ENCODE measurements at regions of chr16 and their contacts with region 1.

Region 1: DNA sequence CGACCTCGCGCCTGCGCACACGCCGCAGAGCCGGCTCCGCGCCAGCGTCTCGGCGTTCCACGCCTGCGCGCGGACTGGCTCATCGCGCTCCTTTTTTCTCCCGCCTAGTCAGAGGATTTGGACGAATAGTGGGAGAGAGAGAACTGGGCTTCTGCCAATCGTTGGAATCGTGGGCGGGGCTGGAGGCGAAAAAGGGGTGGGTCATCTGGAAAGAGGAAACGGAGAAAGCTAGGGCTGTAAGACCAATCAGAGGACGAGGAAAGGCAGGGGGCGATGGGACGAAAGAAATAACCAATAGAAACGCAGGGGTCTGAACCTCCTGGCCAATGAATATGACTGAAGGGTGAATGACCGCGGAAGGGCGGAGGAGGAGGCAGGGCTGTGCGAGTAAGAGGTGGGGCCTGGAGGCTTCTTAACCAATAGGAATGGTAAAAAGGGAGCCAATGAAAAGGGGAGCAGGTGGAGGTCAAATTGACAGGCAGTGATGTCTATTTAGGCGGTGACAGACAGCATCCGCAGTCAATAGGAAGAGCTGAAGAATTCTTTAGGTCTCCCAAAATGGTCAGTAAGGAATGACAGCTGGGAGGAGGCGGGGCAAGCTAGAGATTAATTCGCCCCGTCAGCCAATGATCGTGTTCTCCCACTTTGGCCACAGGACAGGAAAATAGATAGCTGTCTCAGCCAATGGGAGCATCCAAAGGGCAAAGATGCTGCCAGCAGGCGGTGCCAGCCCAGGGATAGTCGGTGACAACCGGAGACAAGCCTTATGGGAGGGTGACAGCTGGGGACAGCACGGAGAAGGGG is at the start of gene TBC1D10B:
- DNase-seq: peak; percentile 96 to 100 (median 99)
- ATAC-seq: peak; percentile 83 to 86 (median 84)
- H3K4me3 ChIP-seq: peak within 1 kb of the TSS; percentile 62 to 66
- H3K4me3 Mint-ChIP-seq: peak within 1 kb of the TSS; percentile 85 to 91 (median 86)
- H3K27ac ChIP-seq: peak within 1 kb of the TSS; percentile 73
- H3K27ac Mint-ChIP-seq: peak within 1 kb of the TSS; percentile 93 to 95
- H3K4me1 ChIP-seq: peaks cover 22 to 44% of the 10 kb centered on the region in 2 experiments
- H3K4me1 Mint-ChIP-seq: peaks cover 45 to 49% (median 46%) of the 10 kb centered on the region in 3 donors
- H3K27me3 ChIP-seq: no peaks in the 10 kb centered on the region
- H3K27me3 Mint-ChIP-seq: no peaks in the 10 kb centered on the region
- total RNA-seq, gene TBC1D10B: 24.0 to 60.1 (median 52.5) TPM

Region 2: GRCh38 chr16:30407102-30407803 is 36.6 kb after region 1 on chr16 and contains the start of gene ZNF771:
- CTCF ChIA-PET with region 1: interaction called, 5 to 32 read pairs
- POLR2A ChIA-PET with region 1: interaction called in 1 of 2 experiments, 4 read pairs
- DNase-seq: peak; percentile 48 to 92 (median 71)
- ATAC-seq: peak; percentile 86 to 93 (median 90)
- H3K4me3 ChIP-seq: peak within 1 kb of the TSS; percentile 59 to 75
- H3K4me3 Mint-ChIP-seq: peak within 1 kb of the TSS; percentile 92 to 95 (median 94)
- H3K27ac ChIP-seq: peak within 1 kb of the TSS; percentile 5
- H3K27ac Mint-ChIP-seq: peak within 1 kb of the TSS; percentile 92 to 96
- H3K4me1 ChIP-seq: peaks cover 3 to 31% of the 10 kb centered on the region in 2 experiments
- H3K4me1 Mint-ChIP-seq: peaks cover 25 to 31% (median 30%) of the 10 kb centered on the region in 3 donors
- H3K27me3 ChIP-seq: no peaks in the 10 kb centered on the region
- H3K27me3 Mint-ChIP-seq: no peaks in the 10 kb centered on the region
- total RNA-seq, gene ZNF771: 1.3 to 6.6 (median 6.2) TPM

Measured in T-cell (primary cell).